ENCODE measurements at regions of chr6 and their contacts with region 1.

Region 1: GRCh38 chr6:13272131-13273046 is 55.9 kb downstream of the TBC1D7 start:
- DNase-seq: no peak
- H3K4me3 Mint-ChIP-seq: no peak overlapping the region
- H3K27ac Mint-ChIP-seq: no peak overlapping the region
- H3K4me1 Mint-ChIP-seq: peaks cover 24% of the 10 kb centered on the region
- H3K27me3 Mint-ChIP-seq: peaks cover 7% of the 10 kb centered on the region

Region 2: DNA sequence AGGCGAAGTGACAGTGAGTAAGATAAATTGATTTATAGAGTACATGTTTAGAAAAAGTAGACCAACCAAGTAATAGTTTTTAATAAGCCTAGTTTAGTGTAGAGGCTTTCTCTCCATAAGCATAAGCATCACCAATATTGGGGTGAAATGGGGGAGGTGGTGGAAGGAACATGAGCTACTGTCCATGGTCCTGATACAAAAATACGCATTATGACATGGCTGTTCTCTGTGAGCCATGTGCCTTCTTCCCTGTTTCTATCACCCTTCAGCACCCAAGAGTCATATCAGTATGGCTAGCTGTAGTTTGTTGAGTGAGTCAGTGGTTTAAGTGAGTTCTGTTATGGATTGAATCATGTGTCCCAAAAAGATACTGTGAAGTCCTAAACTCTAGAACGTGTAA is 831.4 kb before region 1 on chr6:
- intact Hi-C with region 1: no loop called
- DNase-seq: no peak
- H3K4me3 Mint-ChIP-seq: no peak overlapping the region
- H3K27ac Mint-ChIP-seq: no peak overlapping the region
- H3K4me1 Mint-ChIP-seq: peaks cover 5% of the 10 kb centered on the region
- H3K27me3 Mint-ChIP-seq: no peaks in the 10 kb centered on the region

Region 3: GRCh38 chr6:13229205-13230085 is 42.9 kb before region 1 on chr6:
- intact Hi-C with region 1: no loop called
- DNase-seq: peak; percentile 9
- H3K4me3 Mint-ChIP-seq: peak overlapping the region; percentile 2
- H3K27ac Mint-ChIP-seq: peak overlapping the region; percentile 38
- H3K4me1 Mint-ChIP-seq: peaks cover 12% of the 10 kb centered on the region
- H3K27me3 Mint-ChIP-seq: peaks cover 10% of the 10 kb centered on the region

Region 4: DNA sequence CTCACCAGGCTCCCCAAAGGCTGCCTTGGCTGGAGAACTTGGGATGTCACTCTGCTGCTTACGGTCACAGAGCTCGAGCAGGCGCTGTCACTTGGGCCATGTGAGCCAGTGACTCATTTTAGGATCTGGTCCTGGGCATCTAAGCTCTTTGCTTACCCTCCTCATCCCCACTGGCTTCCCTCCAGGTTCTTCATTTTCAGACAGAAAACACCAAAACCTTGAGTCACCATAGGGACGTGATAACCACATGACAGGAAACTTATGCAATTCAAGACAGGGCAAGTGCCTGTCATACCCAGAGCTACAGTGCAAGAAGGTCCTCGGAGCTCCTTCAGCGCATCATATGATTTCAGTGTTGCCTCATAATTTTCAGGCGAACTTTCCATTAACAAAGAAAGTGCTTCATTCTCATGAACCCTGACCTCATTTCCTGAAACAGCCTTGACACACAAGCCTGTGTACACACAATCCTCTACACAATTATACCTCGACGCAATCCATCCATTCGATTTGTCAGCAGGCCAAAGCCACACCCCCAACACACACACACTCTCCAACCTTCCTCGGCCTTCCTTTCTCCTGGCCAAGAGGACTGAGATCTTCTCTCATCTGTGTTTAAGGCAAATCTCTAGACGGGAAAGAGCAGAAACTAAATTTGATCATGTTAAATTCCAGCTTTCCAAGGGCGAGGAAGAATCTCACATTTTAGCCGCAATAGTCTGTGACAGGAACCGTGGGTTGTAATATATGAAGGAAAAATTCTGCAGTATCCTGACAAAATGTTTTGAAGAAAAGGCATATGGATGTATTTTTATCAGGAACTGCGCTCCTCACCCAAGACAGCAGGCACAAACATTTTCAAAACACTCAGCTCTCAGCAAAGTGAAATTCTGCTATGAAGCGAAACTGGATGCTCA is 30.6 kb after region 1 on chr6:
- intact Hi-C with region 1: loop called (anchors 1 kb)
- DNase-seq: peak; percentile 65
- H3K4me3 Mint-ChIP-seq: peak overlapping the region; percentile 61
- H3K27ac Mint-ChIP-seq: peak overlapping the region; percentile 87
- H3K4me1 Mint-ChIP-seq: peaks cover 43% of the 10 kb centered on the region
- H3K27me3 Mint-ChIP-seq: no peaks in the 10 kb centered on the region

Region 5: GRCh38 chr6:13375360-13375878 is 103.0 kb after region 1 on chr6:
- intact Hi-C with region 1: loop called (anchors 1 kb)
- DNase-seq: no peak
- H3K4me3 Mint-ChIP-seq: no peak overlapping the region
- H3K27ac Mint-ChIP-seq: peak overlapping the region; percentile 23
- H3K4me1 Mint-ChIP-seq: peaks cover 39% of the 10 kb centered on the region
- H3K27me3 Mint-ChIP-seq: no peaks in the 10 kb centered on the region